ENCODE measurements at regions of chr5 and their contacts with region 1.

Region 1: GRCh38 chr5:52787600-52788504 is at the starts of genes ITGA1 and PELO:
- DNase-seq: peak; percentile 75 to 86 (median 79)
- ATAC-seq: peak; percentile 88 to 95 (median 92)
- H3K4me3 ChIP-seq: peak within 1 kb of the TSS; percentile 45 to 83 (median 72)
- H3K27ac ChIP-seq: peak within 1 kb of the TSS; percentile 82 to 96 (median 90)
- H3K4me1 ChIP-seq: peaks cover 0 to 42% (median 14%) of the 10 kb centered on the region in 12 donors
- H3K27me3 ChIP-seq: no peaks in the 10 kb centered on the region
- CTCF ChIP-seq: peak; percentile 16 to 71 (median 54)
- POLR2A ChIP-seq: peak in 1 of 2 donors; percentile 55
- total RNA-seq, gene ITGA1: 20.9 to 52.0 (median 24.6) TPM
- total RNA-seq, gene PELO: 12.8 to 28.4 (median 20.1) TPM

Region 2: DNA sequence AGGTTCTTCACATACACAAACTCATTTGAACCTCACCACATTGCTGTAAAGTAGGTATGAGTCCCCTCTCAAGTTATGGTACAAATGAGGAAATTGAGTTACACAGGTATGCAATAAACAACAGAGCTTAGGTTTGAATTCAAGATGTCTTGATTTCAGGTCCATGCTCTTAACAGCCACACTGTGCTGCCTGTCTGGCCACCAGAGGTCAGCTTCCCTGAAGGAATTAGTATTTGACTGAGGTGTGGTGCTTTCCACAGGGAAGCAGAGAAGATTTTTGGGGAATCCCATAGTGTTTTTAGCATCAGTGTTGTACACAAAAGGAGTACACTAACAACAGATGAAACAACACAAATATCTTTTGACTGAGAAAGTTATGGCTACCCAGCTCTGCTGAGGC is 94.6 kb before region 1 on chr5:
- intact Hi-C with region 1: loop called in 9 of 10 experiments (anchors 2 to 10 kb)
- DNase-seq: peak; percentile 40 to 46 (median 43)
- ATAC-seq: peak; percentile 54 to 81 (median 64)
- H3K4me3 ChIP-seq: no peak overlapping the region
- H3K27ac ChIP-seq: peak overlapping the region in 5 of 12 donors; percentile 35 to 56 (median 47)
- H3K4me1 ChIP-seq: peaks cover 0 to 46% (median 15%) of the 10 kb centered on the region in 12 donors
- H3K27me3 ChIP-seq: no peaks in the 10 kb centered on the region
- CTCF ChIP-seq: peak; percentile 55 to 85 (median 67)
- POLR2A ChIP-seq: no peak

Region 3: DNA sequence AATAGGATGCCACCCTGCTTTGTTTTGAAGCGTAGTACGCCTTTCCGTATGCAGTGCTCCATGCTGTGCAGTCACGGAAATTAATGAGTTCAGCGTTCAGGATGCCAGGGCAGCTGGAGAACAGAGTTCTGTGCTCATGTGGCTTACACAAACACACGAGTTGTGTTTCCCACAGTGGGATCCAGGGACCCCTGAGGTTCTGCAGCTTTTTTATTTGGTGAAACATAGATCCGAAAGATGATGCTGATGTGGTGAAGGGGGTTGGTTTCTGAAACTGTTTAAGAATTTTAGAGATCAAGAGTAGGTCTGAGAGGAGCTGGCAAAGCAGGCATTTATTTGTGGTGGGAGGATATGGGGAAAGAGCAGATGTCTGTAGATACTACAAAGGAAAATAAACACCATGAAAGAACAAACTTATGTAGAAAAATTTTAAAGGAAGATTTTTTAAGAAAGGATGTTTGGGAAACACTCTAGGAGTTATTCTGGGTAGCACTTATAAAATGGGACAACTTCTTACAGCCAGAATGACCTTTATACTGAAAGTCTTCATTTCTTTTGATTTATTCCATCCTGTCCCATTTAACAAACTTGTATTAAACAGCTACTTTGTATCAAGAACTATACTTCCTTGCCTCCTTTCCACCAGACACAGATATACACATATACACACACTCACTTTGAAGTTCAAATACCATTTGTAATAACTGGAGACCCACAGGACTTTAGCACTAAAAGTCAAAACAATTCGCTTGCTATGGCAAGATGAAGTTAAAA is 52.6 kb after region 1 on chr5:
- intact Hi-C with region 1: loop called in 1 of 10 experiments (anchors 10 kb)
- DNase-seq: peak in 2 of 5 donors; percentile 27 to 38
- ATAC-seq: peak in 3 of 4 donors; percentile 41 to 82 (median 60)
- H3K4me3 ChIP-seq: peak overlapping the region in 2 of 12 donors; percentile 14 to 20
- H3K27ac ChIP-seq: peak overlapping the region in 10 of 12 donors; percentile 11 to 93 (median 54)
- H3K4me1 ChIP-seq: peaks cover 0 to 75% (median 23%) of the 10 kb centered on the region in 12 donors
- H3K27me3 ChIP-seq: no peaks in the 10 kb centered on the region
- CTCF ChIP-seq: no peak
- POLR2A ChIP-seq: no peak